Ovary (tissue), 10 donors: ENCODE measurements at regions of chr11 and their contacts with region 1.

Region 1: GRCh38 chr11:123580557-123581275 is 73.7 kb downstream of the SCN3B start:
- DNase-seq: peak; percentile 46 to 70 (median 67)
- H3K4me3 ChIP-seq: no peak overlapping the region
- H3K27ac ChIP-seq: no peak overlapping the region
- H3K4me1 ChIP-seq: peaks cover 2% of the 10 kb centered on the region
- H3K27me3 ChIP-seq: no peaks in the 10 kb centered on the region
- CTCF ChIP-seq: peak; percentile 62 to 86 (median 77)
- EP300 ChIP-seq: no peak
- POLR2A ChIP-seq: no peak

Region 2: DNA sequence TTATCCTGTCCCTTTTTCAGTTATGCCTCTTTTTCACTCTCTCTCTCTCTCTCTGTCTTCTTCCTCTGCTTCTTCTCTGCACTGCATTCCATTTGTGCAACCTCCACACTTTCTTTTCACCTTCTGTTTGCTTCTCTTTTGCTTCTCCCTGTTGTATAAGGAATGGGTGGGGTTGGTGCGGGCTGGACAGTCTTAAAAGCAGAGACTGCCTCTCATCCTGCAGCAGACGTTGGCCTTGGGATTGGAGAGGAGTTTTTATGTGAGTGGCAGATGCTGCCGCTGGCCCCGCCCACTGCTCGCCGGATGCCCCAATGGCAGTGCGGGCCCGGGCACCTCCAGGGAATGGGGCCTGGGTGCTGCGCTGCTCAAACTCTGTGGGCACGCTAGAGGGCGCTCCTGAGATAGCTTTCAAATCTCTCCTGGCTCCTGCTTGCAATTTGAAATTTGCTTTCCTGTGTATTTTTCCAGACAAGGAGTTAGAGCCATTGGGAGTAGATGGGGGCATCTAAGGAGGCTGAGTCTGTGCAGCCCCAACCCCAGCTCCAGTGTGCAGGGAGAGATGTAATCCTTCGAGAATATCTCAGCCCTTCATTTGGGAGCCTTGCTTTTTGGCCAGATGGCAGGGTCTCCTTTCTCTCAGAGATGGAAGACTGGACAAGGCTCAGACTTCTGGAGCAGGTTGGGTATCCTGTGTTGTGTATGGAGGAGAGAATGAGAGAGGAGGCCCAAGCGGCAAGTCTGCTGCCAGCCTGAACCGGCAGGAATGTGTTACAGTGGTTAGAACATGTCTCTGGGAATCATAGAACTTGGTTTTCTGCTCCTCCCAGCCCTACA is 69.5 kb before region 1 on chr11:
- intact Hi-C with region 1: loop called (anchors 2 to 5 kb)
- DNase-seq: peak; percentile 84 to 91 (median 89)
- H3K4me3 ChIP-seq: no peak overlapping the region
- H3K27ac ChIP-seq: no peak overlapping the region
- H3K4me1 ChIP-seq: no peaks in the 10 kb centered on the region
- H3K27me3 ChIP-seq: no peaks in the 10 kb centered on the region
- CTCF ChIP-seq: peak; percentile 77 to 89 (median 85)
- EP300 ChIP-seq: no peak
- POLR2A ChIP-seq: no peak

Region 3: GRCh38 chr11:123519055-123519796 is 61.5 kb before region 1 on chr11:
- intact Hi-C with region 1: loop called in 2 of 4 experiments (anchors 5 kb)
- DNase-seq: peak; percentile 27 to 45 (median 34)
- H3K4me3 ChIP-seq: no peak overlapping the region
- H3K27ac ChIP-seq: peak overlapping the region; percentile 41 to 69
- H3K4me1 ChIP-seq: peaks cover 23% of the 10 kb centered on the region
- H3K27me3 ChIP-seq: no peaks in the 10 kb centered on the region
- CTCF ChIP-seq: no peak
- EP300 ChIP-seq: no peak
- POLR2A ChIP-seq: no peak

Region 4: GRCh38 chr11:123536690-123537437 is 43.9 kb before region 1 on chr11:
- intact Hi-C with region 1: no loop called
- DNase-seq: no peak
- H3K4me3 ChIP-seq: no peak overlapping the region
- H3K27ac ChIP-seq: no peak overlapping the region
- H3K4me1 ChIP-seq: no peaks in the 10 kb centered on the region
- H3K27me3 ChIP-seq: no peaks in the 10 kb centered on the region
- CTCF ChIP-seq: no peak
- EP300 ChIP-seq: no peak
- POLR2A ChIP-seq: no peak

Region 5: GRCh38 chr11:123707606-123708205 is 127.0 kb after region 1 on chr11:
- intact Hi-C with region 1: loop called (anchors 2 to 10 kb)
- DNase-seq: peak; percentile 20 to 42 (median 32)
- H3K4me3 ChIP-seq: no peak overlapping the region
- H3K27ac ChIP-seq: no peak overlapping the region
- H3K4me1 ChIP-seq: peaks cover 2% of the 10 kb centered on the region
- H3K27me3 ChIP-seq: no peaks in the 10 kb centered on the region
- CTCF ChIP-seq: peak; percentile 29 to 59 (median 44)
- EP300 ChIP-seq: no peak
- POLR2A ChIP-seq: no peak